CD8-positive, alpha-beta T cell (primary cell): ENCODE measurements at regions of chr2 and their contacts with region 1.

Region 1: GRCh38 chr2:234288974-234289455 is 207.9 kb downstream of the ARL4C start:
- DNase-seq: peak; percentile 52 to 87 (median 73)
- ATAC-seq: no peak
- H3K4me3 ChIP-seq: no peak overlapping the region
- H3K4me3 Mint-ChIP-seq: peak overlapping the region; percentile 9
- H3K27ac ChIP-seq: peak overlapping the region; percentile 94 to 99
- H3K27ac Mint-ChIP-seq: peak overlapping the region; percentile 98
- H3K4me1 ChIP-seq: peaks cover 56% of the 10 kb centered on the region
- H3K4me1 Mint-ChIP-seq: peaks cover 66% of the 10 kb centered on the region
- H3K27me3 ChIP-seq: no peaks in the 10 kb centered on the region
- H3K27me3 Mint-ChIP-seq: no peaks in the 10 kb centered on the region
- CTCF ChIP-seq: peak; percentile 77

Region 2: DNA sequence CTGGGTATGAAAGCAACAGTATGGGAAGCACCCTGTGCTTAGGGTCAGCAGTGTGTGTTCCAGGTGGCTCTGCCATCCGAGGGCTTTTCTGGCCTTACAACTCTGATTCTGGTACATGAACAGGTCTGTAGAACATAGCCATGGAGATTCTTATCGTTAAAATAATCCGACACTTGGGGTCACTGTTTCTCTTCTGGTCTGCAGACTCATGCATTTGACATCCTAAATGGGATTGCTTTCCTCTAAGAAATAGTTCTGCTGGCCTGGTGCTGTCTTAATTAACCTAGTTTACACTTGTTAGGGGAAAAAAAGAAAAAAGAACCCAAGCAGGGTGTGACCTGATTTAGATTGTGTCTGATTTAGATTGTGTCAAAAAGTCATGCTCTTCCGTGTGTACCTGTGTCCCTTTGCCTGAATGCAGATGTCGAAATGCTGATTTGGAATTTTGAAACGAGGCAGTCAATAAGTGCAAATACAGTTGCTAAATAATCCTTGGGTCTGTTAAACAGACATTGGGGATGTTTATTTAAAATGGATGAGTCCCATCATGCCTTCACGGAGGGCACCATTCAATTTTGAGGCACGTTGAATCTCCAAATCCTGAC is 312.2 kb before region 1 on chr2:
- CTCF ChIA-PET with region 1: interaction called, 4 read pairs
- POLR2A ChIA-PET with region 1: no interaction called
- intact Hi-C with region 1: loop called (anchors 2 to 5 kb)
- DNase-seq: peak in 4 of 9 experiments; percentile 28 to 82 (median 66)
- ATAC-seq: peak; percentile 71
- H3K4me3 ChIP-seq: no peak overlapping the region
- H3K4me3 Mint-ChIP-seq: no peak overlapping the region
- H3K27ac ChIP-seq: no peak overlapping the region
- H3K27ac Mint-ChIP-seq: peak overlapping the region; percentile 8
- H3K4me1 ChIP-seq: peaks cover 8% of the 10 kb centered on the region
- H3K4me1 Mint-ChIP-seq: peaks cover 29% of the 10 kb centered on the region
- H3K27me3 ChIP-seq: no peaks in the 10 kb centered on the region
- H3K27me3 Mint-ChIP-seq: no peaks in the 10 kb centered on the region
- CTCF ChIP-seq: peak; percentile 58

Region 3: GRCh38 chr2:234278556-234279255 is 10.3 kb before region 1 on chr2:
- CTCF ChIA-PET with region 1: interaction called, 14 read pairs
- POLR2A ChIA-PET with region 1: interaction called, 4 read pairs
- intact Hi-C with region 1: loop called (anchors 1 kb)
- DNase-seq: peak in 5 of 9 experiments; percentile 25 to 76 (median 44)
- ATAC-seq: peak; percentile 76
- H3K4me3 ChIP-seq: no peak overlapping the region
- H3K4me3 Mint-ChIP-seq: peak overlapping the region; percentile 38
- H3K27ac ChIP-seq: peak overlapping the region in 1 of 2 experiments; percentile 47
- H3K27ac Mint-ChIP-seq: peak overlapping the region; percentile 85
- H3K4me1 ChIP-seq: peaks cover 36% of the 10 kb centered on the region
- H3K4me1 Mint-ChIP-seq: peaks cover 55% of the 10 kb centered on the region
- H3K27me3 ChIP-seq: no peaks in the 10 kb centered on the region
- H3K27me3 Mint-ChIP-seq: no peaks in the 10 kb centered on the region
- CTCF ChIP-seq: no peak

Region 4: DNA sequence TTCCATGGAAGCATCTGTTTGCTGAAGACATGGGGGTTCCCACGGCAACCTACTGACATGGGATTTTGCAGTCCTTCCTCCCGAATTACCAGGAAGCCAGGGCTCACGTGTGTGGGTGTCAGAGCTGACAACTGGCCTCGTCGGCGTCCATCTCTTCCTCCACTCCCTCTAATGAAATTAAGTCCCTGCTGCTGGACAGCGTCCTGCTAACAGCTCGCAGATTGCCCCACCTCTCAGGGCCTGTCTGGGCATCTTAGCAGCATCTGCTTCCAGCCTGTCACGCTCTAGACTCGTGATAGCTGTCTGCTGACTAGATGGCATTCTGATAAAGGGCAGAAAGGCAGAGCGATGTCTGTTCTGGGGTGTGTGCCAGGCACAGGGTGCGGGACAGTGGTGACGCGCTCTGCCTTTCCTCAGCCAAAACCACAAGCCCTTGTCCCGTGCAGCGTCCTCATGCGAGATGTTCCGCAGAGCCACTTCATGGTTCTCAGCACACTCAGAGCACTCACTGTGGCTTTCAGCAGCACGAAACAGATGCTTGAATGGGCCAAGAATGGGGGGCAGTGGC is 46.7 kb after region 1 on chr2:
- CTCF ChIA-PET with region 1: interaction called, 3 read pairs
- POLR2A ChIA-PET with region 1: interaction called, 4 read pairs
- intact Hi-C with region 1: loop called in 1 of 2 experiments (anchors 5 kb)
- DNase-seq: peak; percentile 14 to 79 (median 58)
- ATAC-seq: peak; percentile 91
- H3K4me3 ChIP-seq: peak overlapping the region in 1 of 2 experiments; percentile 14
- H3K4me3 Mint-ChIP-seq: peak overlapping the region; percentile 67
- H3K27ac ChIP-seq: no peak overlapping the region
- H3K27ac Mint-ChIP-seq: peak overlapping the region; percentile 89
- H3K4me1 ChIP-seq: peaks cover 13% of the 10 kb centered on the region
- H3K4me1 Mint-ChIP-seq: peaks cover 23% of the 10 kb centered on the region
- H3K27me3 ChIP-seq: no peaks in the 10 kb centered on the region
- H3K27me3 Mint-ChIP-seq: no peaks in the 10 kb centered on the region
- CTCF ChIP-seq: no peak

Region 5: DNA sequence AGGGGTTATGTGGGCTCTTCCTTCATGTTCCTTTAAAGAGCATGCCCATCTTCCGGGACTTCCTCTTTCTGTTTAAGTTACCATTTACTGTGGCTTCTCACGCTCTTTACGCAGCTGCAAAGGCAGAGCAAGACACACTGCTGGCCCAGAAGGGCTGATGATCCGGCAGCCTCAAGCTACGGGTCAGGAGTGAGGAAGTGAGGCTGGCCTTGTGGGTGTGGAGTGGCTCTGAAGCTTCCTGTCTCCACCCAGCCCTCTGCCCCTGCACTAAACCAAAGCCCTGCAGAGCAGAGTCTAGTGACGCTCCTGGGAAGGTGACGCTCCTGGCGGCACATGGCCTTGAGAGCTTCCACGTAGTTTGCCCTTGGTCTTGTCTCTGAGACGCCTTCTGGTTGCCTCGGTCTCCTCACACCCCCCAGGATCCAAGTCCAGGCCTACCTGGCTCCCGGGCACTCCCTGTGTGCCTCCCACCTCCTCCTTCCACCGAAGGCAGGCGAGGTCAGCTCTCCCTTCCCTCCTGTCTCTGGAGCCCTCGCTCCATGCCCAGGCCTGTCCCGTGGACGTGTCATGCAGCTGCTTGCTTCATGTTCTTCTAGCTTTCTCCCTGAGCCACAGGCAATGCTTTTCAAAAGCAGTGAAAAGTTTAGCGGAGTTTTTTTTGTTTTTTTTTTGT is 157.5 kb after region 1 on chr2:
- CTCF ChIA-PET with region 1: interaction called, 7 read pairs
- POLR2A ChIA-PET with region 1: interaction called, 38 read pairs
- intact Hi-C with region 1: loop called (anchors 2 to 5 kb)
- DNase-seq: peak; percentile 63 to 97 (median 81)
- ATAC-seq: peak; percentile 84
- H3K4me3 ChIP-seq: no peak overlapping the region
- H3K4me3 Mint-ChIP-seq: peak overlapping the region; percentile 70
- H3K27ac ChIP-seq: peak overlapping the region; percentile 90 to 94
- H3K27ac Mint-ChIP-seq: peak overlapping the region; percentile 98
- H3K4me1 ChIP-seq: peaks cover 82% of the 10 kb centered on the region
- H3K4me1 Mint-ChIP-seq: peaks cover 84% of the 10 kb centered on the region
- H3K27me3 ChIP-seq: no peaks in the 10 kb centered on the region
- H3K27me3 Mint-ChIP-seq: no peaks in the 10 kb centered on the region
- CTCF ChIP-seq: no peak

Region 6: DNA sequence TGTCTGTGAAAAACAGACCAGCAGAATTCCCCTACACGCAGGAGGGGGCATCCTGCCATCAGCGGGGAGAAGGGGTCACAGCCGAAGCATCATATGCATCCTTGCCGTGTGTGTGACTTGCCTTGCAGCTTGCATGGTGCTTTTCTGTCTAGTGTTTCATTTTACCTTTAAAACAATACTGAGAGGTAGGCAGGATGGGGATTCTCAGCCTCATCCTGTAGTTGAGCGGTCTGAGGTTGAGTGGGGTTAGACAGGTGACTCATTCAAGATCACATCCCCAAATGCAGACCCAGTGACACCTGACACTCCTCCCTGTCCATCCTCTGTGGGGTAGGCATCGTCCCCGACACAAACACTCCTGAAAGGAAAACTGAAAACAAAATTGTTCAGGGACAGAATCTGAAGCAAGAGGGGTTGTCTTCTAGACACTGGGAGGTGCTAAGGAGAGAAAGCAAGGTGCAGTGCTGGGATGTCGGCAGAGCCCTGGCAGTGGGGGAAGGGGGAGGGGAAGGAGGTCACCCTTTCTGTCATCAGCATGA is 200.0 kb after region 1 on chr2:
- CTCF ChIA-PET with region 1: interaction called, 11 read pairs
- POLR2A ChIA-PET with region 1: interaction called, 13 read pairs
- intact Hi-C with region 1: loop called in 1 of 2 experiments (anchors 2 kb)
- DNase-seq: peak; percentile 43 to 95 (median 77)
- ATAC-seq: peak; percentile 76
- H3K4me3 ChIP-seq: peak overlapping the region; percentile 6 to 32
- H3K4me3 Mint-ChIP-seq: peak overlapping the region; percentile 85
- H3K27ac ChIP-seq: peak overlapping the region; percentile 70 to 89
- H3K27ac Mint-ChIP-seq: peak overlapping the region; percentile 98
- H3K4me1 ChIP-seq: peaks cover 82% of the 10 kb centered on the region
- H3K4me1 Mint-ChIP-seq: peaks cover 89% of the 10 kb centered on the region
- H3K27me3 ChIP-seq: no peaks in the 10 kb centered on the region
- H3K27me3 Mint-ChIP-seq: no peaks in the 10 kb centered on the region
- CTCF ChIP-seq: no peak